ENCODE measurements at regions of chr11 and their contacts with region 1.

Region 1: GRCh38 chr11:61429691-61430582 is at the starts of genes CPSF7 and SDHAF2:
- DNase-seq: peak; percentile 97 to 99 (median 98)
- ATAC-seq: peak; percentile 97 to 99 (median 98)
- H3K4me3 ChIP-seq: peak within 1 kb of the TSS; percentile 61 to 97 (median 80)
- H3K27ac ChIP-seq: peak within 1 kb of the TSS; percentile 90 to 99 (median 96)
- H3K4me1 ChIP-seq: peaks cover 0 to 50% (median 37%) of the 10 kb centered on the region in 12 donors
- H3K27me3 ChIP-seq: no peaks in the 10 kb centered on the region
- CTCF ChIP-seq: no peak
- POLR2A ChIP-seq: peak; percentile 24 to 62
- total RNA-seq, gene CPSF7: 27.3 to 52.4 (median 37.6) TPM
- total RNA-seq, gene SDHAF2: 25.7 to 124 (median 33.7) TPM

Region 2: DNA sequence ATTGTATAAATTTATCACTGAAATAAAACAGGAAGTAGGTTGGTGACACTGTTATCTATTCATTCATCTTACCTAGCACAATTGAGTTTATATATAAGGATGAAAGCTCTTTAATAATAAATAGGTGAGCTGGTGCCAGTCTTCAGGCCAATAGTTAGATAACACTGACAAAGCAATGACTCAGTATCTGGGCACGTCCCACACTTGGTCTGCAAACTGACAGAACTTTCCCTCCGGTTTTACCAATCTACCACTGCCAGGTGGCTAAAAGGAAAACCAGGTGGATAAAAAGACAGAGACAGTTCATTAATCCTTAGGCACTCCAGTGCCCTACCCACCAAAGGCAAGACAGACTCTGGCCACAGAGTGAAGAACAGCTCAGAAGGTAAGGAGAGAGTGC is 114.7 kb before region 1 on chr11:
- intact Hi-C with region 1: no loop called
- DNase-seq: no peak
- ATAC-seq: peak in 1 of 4 donors; percentile 22
- H3K4me3 ChIP-seq: no peak overlapping the region
- H3K27ac ChIP-seq: no peak overlapping the region
- H3K4me1 ChIP-seq: no peaks in the 10 kb centered on the region
- H3K27me3 ChIP-seq: no peaks in the 10 kb centered on the region
- CTCF ChIP-seq: no peak
- POLR2A ChIP-seq: no peak

Region 3: DNA sequence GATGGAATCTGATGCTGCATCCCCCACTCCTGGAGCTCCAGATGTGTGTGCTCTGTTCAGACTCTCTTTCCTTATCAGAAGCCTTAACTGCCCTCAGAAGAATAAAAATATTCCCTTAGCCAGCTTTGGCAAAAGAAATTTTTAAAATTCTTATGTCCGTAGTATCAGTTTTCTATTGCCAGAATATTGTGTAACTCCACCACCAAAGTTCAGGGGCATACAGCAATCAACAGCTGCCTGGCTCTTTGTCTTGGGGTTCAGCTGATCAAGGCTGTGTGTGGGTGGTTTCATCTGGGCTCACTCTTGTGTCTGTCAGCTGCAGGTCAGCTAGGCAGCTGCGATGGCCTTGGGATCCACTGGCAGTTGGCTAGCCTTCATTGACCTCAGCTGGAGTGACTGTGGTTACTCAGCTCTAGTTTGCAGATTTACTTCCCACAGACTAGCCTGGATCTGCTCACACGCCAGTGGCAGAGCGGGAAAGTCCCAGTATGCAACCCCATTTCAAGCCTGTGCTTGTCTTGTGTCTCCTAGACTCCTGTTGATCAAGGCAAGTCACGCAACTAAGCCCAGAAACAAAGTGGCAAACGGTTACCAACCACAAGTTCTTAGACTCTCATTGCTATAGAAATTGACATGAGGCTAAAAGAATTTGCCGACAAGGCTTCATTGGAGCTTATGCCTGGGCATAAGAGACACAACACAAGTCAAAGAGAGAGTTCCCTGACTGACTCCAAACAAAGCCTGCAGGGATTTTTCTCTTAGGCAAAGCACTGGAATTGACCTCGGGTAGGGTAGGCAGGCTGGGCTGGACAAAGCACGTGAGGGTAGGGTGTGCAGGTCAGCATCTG is 60.3 kb before region 1 on chr11:
- intact Hi-C with region 1: loop called in 1 of 10 experiments (anchors 5 kb)
- DNase-seq: peak; percentile 36 to 78 (median 70)
- ATAC-seq: peak; percentile 63 to 95 (median 87)
- H3K4me3 ChIP-seq: no peak overlapping the region
- H3K27ac ChIP-seq: peak overlapping the region in 7 of 12 donors; percentile 7 to 60 (median 41)
- H3K4me1 ChIP-seq: peaks cover 0 to 13% (median 0%) of the 10 kb centered on the region in 12 donors
- H3K27me3 ChIP-seq: no peaks in the 10 kb centered on the region
- CTCF ChIP-seq: no peak
- POLR2A ChIP-seq: no peak

Region 4: GRCh38 chr11:61488651-61489291 is 58.8 kb after region 1 on chr11:
- intact Hi-C with region 1: no loop called
- DNase-seq: peak; percentile 77 to 88 (median 81)
- ATAC-seq: peak; percentile 48 to 76 (median 68)
- H3K4me3 ChIP-seq: peak overlapping the region in 5 of 12 donors; percentile 10 to 28 (median 17)
- H3K27ac ChIP-seq: peak overlapping the region in 9 of 12 donors; percentile 38 to 79 (median 67)
- H3K4me1 ChIP-seq: peaks cover 0 to 25% (median 17%) of the 10 kb centered on the region in 12 donors
- H3K27me3 ChIP-seq: no peaks in the 10 kb centered on the region
- CTCF ChIP-seq: no peak
- POLR2A ChIP-seq: no peak